ENCODE measurements at regions of chr2 and their contacts with region 1.

Region 1: DNA sequence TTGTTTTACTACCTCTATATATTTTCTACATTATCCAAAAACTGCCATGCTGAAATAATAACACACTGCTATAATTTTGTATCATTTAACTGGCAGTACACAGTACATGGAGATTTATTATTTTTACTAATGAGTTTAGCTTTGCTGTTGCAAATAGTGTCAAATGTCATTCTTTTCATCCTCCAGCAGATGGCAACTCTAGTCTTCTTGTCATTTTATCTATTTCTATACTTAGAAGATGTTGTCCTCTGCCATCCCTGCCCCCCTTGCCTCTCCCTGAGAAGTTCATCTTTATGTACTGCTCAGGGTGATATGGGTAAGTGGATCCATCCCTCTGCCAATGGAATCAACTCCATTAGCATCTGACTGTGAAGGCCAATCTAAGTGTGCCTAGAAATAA is 21.7 kb upstream of the LRRTM1 start:
- DNase-seq: no peak
- ATAC-seq: peak; percentile 76

Region 2: DNA sequence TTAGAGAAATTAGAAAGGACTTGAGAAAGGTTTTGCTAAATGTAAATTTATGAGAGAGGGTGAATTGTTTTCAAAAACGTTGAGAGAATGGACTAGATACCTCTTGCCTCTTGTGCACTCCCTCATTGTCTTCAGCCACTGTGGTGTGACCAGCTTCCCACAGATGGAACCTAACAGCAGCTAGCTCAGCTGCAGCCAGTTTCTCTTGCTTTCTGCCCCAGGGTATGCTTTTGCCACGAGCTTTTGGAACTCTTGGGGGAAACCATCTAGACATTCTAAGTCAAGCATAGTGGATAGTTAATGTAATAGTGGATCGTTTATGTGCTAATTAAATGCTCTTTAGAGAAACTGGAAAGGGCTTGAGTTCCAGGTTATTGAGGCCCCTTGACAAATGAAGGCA is 525.1 kb before region 1 on chr2:
- intact Hi-C with region 1: no loop called
- DNase-seq: no peak
- ATAC-seq: no peak

Region 3: DNA sequence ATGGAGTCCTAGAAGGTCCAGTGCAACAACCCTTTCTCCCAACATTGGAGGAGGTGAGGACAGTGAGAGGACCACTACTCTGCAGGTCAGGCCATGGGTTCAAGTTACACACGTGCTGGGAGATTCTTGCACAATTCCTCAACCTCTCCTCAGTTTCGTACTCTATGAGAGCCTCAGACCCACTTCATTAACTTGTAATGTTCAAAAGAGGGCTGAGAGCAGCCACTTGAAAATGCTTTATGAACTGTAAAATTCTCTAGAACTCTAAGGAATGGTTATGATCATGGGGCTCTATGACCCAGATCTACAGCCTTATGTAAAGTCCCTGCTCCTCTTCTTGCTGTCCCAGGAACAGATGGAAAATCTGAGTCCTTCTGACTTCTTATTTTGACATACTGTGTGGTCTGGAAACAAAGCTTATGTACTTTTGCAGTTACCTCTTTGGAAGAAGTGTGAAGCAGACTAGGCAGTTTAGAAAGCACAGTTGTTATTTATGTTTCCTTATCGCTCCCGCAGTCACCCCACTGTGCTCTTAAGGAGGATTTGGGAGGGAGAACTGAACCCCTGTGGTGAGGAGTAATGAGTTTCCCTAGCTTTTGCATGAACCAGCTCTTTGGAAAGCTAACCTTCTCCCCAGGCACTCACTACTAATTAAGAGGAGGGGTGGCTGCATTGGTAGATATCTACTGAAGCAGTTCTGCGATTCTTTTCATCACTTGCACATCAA is 318.3 kb before region 1 on chr2:
- intact Hi-C with region 1: no loop called
- DNase-seq: no peak
- ATAC-seq: no peak

Region 4: GRCh38 chr2:80073134-80073561 is 253.1 kb before region 1 on chr2:
- intact Hi-C with region 1: loop called (anchors 10 kb)
- DNase-seq: no peak
- ATAC-seq: peak; percentile 73

Region 5: DNA sequence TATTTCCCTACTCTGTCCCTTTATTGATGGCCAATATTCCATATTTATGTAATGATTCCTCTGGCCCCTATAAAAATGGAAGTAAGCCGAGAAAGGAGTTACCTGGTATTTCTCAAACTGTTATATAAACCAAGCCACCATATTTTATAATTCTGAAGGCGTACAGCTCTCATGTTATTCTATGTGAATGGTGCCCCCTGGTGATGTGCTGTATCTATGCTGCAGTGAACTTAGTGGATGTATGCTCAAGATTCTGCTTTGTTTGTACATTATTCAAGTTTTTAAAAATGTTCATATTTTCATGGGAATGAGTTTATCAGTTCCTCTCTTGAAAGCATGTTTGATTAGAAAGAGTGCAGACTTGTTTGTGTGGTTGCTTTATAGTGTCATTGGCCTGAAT is 172.9 kb after region 1 on chr2:
- intact Hi-C with region 1: loop called (anchors 2 kb)
- DNase-seq: no peak
- ATAC-seq: peak; percentile 87